Naive thymus-derived CD8-positive, alpha-beta T cell (primary cell): ENCODE measurements at regions of chr12 and their contacts with region 1.

Region 1: DNA sequence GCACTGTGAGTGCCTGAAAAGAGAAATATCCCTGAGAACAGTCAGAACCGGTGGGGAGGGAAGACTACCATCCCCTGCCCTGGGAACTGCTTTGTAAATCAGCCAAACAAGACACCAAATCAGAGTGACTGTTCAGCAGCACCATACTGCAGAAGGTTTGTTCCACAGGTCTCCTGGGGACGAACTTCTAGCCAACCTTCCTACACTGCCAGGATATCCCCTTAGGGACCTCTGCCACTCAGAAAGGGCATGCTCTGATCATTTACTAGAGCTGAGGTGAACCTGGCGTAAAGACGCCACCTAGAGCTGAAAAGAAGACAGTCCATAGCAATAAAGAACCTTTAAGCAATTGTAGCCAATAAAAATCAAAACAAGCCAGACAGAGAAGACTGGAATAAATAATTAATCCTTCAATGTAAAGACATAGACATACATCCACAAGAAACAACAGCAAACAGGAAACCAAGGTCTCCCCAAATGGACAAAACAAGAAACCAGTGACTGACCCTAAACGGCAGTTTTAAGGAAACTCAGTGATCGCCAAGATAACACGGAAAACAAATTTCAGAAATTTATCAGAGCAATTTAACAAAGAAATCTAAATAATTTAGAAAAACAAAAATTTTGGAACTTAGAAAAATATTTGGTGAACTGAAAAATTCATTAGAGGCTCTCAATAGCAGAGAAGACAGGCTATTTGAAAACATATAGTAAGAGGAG is 228.1 kb upstream of the AMIGO2 start:
- DNase-seq: peak in 9 of 10 donors; percentile 27 to 77 (median 50)
- ATAC-seq: peak; percentile 93 to 96
- H3K4me3 Mint-ChIP-seq: peak overlapping the region; percentile 79 to 93 (median 90)
- H3K27ac Mint-ChIP-seq: peak overlapping the region; percentile 69 to 96 (median 92)
- H3K4me1 Mint-ChIP-seq: peaks cover 20 to 45% (median 43%) of the 10 kb centered on the region in 4 donors
- H3K27me3 Mint-ChIP-seq: no peaks in the 10 kb centered on the region

Region 2: GRCh38 chr12:46933947-46934346 is 373.9 kb before region 1 on chr12:
- POLR2A ChIA-PET with region 1: no interaction called
- DNase-seq: peak in 3 of 10 donors; percentile 5 to 27 (median 13)
- ATAC-seq: no peak
- H3K4me3 Mint-ChIP-seq: no peak overlapping the region
- H3K27ac Mint-ChIP-seq: no peak overlapping the region
- H3K4me1 Mint-ChIP-seq: no peaks in the 10 kb centered on the region
- H3K27me3 Mint-ChIP-seq: peaks cover 5 to 10% (median 9%) of the 10 kb centered on the region in 5 donors

Region 3: GRCh38 chr12:47032644-47033043 is 275.2 kb before region 1 on chr12:
- POLR2A ChIA-PET with region 1: interaction called, 16 read pairs
- DNase-seq: peak in 6 of 10 donors; percentile 34 to 74 (median 68)
- ATAC-seq: peak; percentile 80 to 88
- H3K4me3 Mint-ChIP-seq: peak overlapping the region in 2 of 10 donors; percentile 5
- H3K27ac Mint-ChIP-seq: peak overlapping the region in 5 of 10 donors; percentile 1 to 67 (median 16)
- H3K4me1 Mint-ChIP-seq: peaks cover 15 to 33% (median 20%) of the 10 kb centered on the region in 4 donors
- H3K27me3 Mint-ChIP-seq: no peaks in the 10 kb centered on the region

Region 4: DNA sequence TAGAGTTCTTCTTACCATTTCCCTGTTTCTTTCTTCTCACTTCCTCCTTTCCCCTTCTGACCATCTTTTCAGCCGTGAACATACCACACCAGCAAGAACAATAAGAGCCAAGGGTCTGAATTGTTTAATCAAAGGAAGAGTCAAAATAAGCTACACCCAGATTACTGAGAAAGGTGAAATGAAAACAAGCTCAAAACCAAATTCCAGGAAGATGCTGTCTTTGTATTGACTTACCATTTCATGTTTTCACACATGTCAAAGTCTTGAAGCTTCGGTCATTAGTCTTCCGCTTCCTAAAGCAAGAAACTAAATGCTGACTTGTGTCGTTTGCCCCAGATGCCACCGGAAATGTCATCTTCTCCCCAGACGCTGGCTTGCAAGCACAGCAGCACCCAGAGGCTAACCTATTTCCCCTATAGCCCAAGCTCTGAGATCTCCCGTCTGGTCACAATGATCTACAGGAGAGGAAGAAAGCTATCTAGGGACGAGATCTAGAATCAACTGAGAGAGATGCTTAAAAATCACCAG is 91.6 kb before region 1 on chr12:
- POLR2A ChIA-PET with region 1: interaction called, 60 read pairs
- DNase-seq: peak in 9 of 10 donors; percentile 50 to 84 (median 70)
- ATAC-seq: peak; percentile 43 to 69
- H3K4me3 Mint-ChIP-seq: peak overlapping the region; percentile 95 to 99 (median 98)
- H3K27ac Mint-ChIP-seq: peak overlapping the region; percentile 93 to 99 (median 96)
- H3K4me1 Mint-ChIP-seq: peaks cover 9 to 66% (median 23%) of the 10 kb centered on the region in 4 donors
- H3K27me3 Mint-ChIP-seq: no peaks in the 10 kb centered on the region